HepG2 (cell line): ENCODE measurements at regions of chr1 and their contacts with region 1.

Region 1: GRCh38 chr1:24018611-24019580 is 38.8 kb upstream of the SRSF10 start:
- DNase-seq: peak; percentile 98
- ATAC-seq: peak; percentile 48
- H3K4me3 ChIP-seq: peak overlapping the region in 2 of 3 experiments; percentile 4 to 49; a peak in 3 of 6 replicates
- H3K27ac ChIP-seq: peak overlapping the region; percentile 98
- H3K4me1 ChIP-seq: peaks cover 100% of the 10 kb centered on the region
- H3K27me3 ChIP-seq: no peaks in the 10 kb centered on the region; a peak in 1 of 5 replicates
- CTCF ChIP-seq: no peak
- EP300 ChIP-seq: peak; percentile 84 to 85
- POLR2A ChIP-seq: peak in 1 of 2 experiments; percentile 50; a peak in 1 of 4 replicates
- RAD21 ChIP-seq: no peak

Region 2: DNA sequence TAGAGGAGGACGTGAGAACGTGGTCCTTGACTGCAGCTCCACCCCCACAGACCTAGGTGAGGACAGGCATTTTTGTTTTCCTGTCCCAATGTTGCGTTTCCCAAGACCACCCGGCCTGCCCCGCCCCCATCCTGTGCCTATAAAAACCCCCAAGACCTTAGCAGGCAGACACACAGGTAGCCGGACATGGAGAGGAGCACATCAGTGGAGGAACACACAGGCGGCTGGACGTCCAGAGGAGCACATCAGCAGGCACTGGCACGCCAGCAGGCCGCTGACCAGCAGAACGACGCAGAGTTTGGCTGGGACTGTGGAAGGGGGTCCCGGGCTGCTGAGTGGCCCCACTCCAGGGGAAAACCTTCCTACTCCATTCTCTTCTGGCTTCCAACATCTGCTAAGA is 181.0 kb before region 1 on chr1:
- CTCF ChIA-PET with region 1: no interaction called
- POLR2A ChIA-PET with region 1: no interaction called
- in situ Hi-C with region 1: no loop called
- intact Hi-C with region 1: no loop called
- DNase-seq: no peak
- ATAC-seq: peak; percentile 74
- H3K4me3 ChIP-seq: peak overlapping the region; percentile 47 to 71 (median 48); a peak in 5 of 6 replicates
- H3K27ac ChIP-seq: no peak overlapping the region
- H3K4me1 ChIP-seq: peaks cover 22% of the 10 kb centered on the region
- H3K27me3 ChIP-seq: peaks cover 0 to 6% of the 10 kb centered on the region in 2 experiments; a peak in 3 of 5 replicates
- CTCF ChIP-seq: no peak
- EP300 ChIP-seq: no peak
- POLR2A ChIP-seq: 0 out of 4 replicates have a peak, but pooled peaks of 1 of the 2 experiments have one; percentile 40
- RAD21 ChIP-seq: no peak

Region 3: DNA sequence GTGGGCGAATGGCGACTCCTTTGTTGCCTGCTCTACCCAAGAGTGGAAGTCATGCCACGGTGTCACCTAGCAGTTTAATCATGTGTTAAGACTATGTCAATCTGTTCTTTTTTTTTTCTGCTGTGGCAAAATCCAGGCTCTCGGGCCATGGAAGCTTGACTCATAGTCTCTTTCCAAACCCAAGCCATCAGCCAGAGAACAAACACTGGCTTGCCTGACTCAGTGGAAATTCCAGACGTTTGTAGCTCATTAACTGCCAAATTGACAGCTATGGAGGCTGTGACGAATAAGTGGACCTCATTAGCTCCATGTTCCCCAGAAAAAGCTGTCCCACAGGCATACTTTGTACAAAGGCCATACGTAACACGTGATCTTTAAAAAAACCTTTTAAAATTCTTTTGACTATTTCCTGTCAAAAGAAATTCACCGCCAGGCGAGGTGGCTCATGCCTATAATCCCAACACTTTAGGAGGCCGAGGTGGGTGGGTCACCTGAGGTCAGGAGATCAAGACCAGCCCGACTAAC is 67.3 kb before region 1 on chr1:
- CTCF ChIA-PET with region 1: no interaction called
- POLR2A ChIA-PET with region 1: interaction called, 22 read pairs
- in situ Hi-C with region 1: no loop called
- intact Hi-C with region 1: no loop called
- DNase-seq: peak; percentile 86
- ATAC-seq: peak; percentile 77
- H3K4me3 ChIP-seq: peak overlapping the region in 2 of 3 experiments; percentile 9 to 46; a peak in 4 of 6 replicates
- H3K27ac ChIP-seq: peak overlapping the region; percentile 26
- H3K4me1 ChIP-seq: peaks cover 53% of the 10 kb centered on the region
- H3K27me3 ChIP-seq: no peaks in the 10 kb centered on the region
- CTCF ChIP-seq: no peak
- EP300 ChIP-seq: no peak
- POLR2A ChIP-seq: no peak
- RAD21 ChIP-seq: no peak

Region 4: DNA sequence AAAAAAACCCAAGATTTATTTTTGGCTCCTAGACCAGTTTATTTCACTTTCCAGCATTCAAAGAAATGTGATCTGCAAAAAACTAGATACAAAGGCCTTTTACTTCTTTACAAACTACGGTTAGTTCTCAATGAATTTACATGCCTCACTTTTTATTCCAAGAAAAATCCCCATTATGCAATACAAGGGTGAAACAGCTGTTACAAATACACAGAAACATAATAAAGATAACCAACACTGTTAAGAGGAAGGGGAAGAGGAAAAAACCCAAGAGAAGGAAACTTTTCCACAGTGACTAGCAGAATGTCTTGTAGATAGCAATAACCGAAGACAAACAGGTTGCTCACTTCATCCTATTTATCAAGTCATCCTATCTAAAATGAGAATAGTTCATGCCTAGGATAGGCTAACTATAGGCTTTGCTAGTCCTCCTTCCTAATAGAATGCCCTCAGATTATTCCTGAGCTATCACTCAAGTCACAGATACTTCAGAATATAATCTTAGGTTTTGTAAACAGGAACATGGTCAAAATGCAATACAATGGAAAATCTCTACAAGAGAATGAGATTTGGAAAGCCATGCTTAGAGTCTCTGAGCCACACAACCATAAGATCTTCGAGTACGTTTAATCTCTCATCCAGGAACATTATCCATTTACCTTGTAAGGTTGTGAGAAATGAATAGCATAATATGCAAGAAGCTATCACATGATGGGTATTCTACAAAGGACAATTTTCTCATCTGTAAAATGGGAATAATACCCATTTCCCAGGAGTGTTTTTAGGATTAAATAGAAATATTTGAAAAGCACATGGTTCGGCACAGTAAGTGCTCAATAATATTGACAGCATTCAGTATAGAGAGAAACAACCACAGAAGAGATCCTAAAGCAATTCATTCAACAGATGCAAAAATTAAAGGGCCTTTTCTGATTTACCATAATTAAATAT is 53.8 kb before region 1 on chr1:
- CTCF ChIA-PET with region 1: no interaction called
- POLR2A ChIA-PET with region 1: interaction called, 32 read pairs
- in situ Hi-C with region 1: no loop called
- intact Hi-C with region 1: no loop called
- DNase-seq: no peak
- ATAC-seq: peak; percentile 20; the same call in 1 of the 3 replicates
- H3K4me3 ChIP-seq: no peak overlapping the region
- H3K27ac ChIP-seq: no peak overlapping the region
- H3K4me1 ChIP-seq: no peaks in the 10 kb centered on the region
- H3K27me3 ChIP-seq: peaks cover 0 to 4% of the 10 kb centered on the region in 2 experiments; a peak in 1 of 5 replicates
- CTCF ChIP-seq: no peak
- EP300 ChIP-seq: no peak
- POLR2A ChIP-seq: no peak
- RAD21 ChIP-seq: no peak

Region 5: DNA sequence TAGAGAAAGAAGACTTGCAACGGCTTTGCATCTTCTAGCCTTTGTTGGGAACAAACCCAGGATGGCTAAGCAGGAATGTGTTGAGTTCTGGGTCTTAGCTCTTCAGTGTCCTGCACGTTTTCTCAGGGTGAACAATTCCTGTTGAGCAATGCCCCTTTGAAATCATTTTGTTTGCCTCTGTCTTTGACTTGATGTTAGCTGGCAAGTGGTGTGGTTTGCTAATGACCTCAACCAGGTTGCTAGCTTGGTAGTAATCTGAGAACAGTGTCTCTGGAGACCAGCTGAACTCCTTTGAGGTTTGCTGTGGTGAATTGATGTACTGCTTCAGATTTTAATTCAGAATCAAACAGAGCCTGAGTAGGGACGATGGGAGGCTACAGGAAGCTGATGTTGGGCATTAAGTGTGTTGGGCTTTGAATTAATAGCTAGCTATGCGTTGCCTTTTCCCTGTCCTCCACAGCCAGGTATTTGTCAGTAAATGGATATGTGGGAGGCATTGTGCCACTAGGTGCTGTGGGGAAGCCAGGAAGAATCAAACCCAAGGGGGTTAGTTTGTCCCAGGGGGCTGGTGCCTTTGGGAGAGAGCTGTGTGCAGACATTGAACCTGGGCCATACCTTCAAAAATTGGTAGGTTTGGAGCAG is 15.4 kb before region 1 on chr1:
- CTCF ChIA-PET with region 1: no interaction called
- POLR2A ChIA-PET with region 1: interaction called, 63 read pairs
- in situ Hi-C with region 1: no loop called
- intact Hi-C with region 1: loop called (anchors 2 kb)
- DNase-seq: peak; percentile 86
- ATAC-seq: peak; percentile 81
- H3K4me3 ChIP-seq: peak overlapping the region in 2 of 3 experiments; percentile 31 to 46; a peak in 3 of 6 replicates
- H3K27ac ChIP-seq: peak overlapping the region; percentile 71
- H3K4me1 ChIP-seq: peaks cover 81% of the 10 kb centered on the region
- H3K27me3 ChIP-seq: no peaks in the 10 kb centered on the region
- CTCF ChIP-seq: no peak
- EP300 ChIP-seq: peak in 1 of 2 experiments; percentile 51; a peak in 1 of 4 replicates
- POLR2A ChIP-seq: no peak
- RAD21 ChIP-seq: no peak